HepG2 (cell line): ENCODE measurements at regions of chr14 and their contacts with region 1.

Region 1: GRCh38 chr14:54642801-54643697 is 76.1 kb downstream of the SAMD4A start:
- DNase-seq: peak; percentile 93
- ATAC-seq: peak; percentile 85
- H3K4me3 ChIP-seq: peak overlapping the region in 2 of 3 experiments; percentile 17 to 50; a peak in 4 of 6 replicates
- H3K27ac ChIP-seq: peak overlapping the region; percentile 83
- H3K4me1 ChIP-seq: peaks cover 94% of the 10 kb centered on the region
- H3K27me3 ChIP-seq: no peaks in the 10 kb centered on the region
- CTCF ChIP-seq: peak; percentile 53
- EP300 ChIP-seq: peak in 1 of 2 experiments; percentile 67; a peak in 2 of 4 replicates
- POLR2A ChIP-seq: no peak
- RAD21 ChIP-seq: no peak

Region 2: GRCh38 chr14:54691525-54692283 is 48.7 kb after region 1 on chr14:
- CTCF ChIA-PET with region 1: no interaction called
- POLR2A ChIA-PET with region 1: no interaction called
- in situ Hi-C with region 1: no loop called
- intact Hi-C with region 1: loop called (anchors 5 kb)
- DNase-seq: peak; percentile 70
- ATAC-seq: peak; percentile 96
- H3K4me3 ChIP-seq: no peak overlapping the region
- H3K27ac ChIP-seq: no peak overlapping the region
- H3K4me1 ChIP-seq: peaks cover 18% of the 10 kb centered on the region; the same call in 1 of the 2 replicates
- H3K27me3 ChIP-seq: no peaks in the 10 kb centered on the region; a peak in 1 of 5 replicates
- CTCF ChIP-seq: peak; percentile 90
- EP300 ChIP-seq: no peak
- POLR2A ChIP-seq: no peak
- RAD21 ChIP-seq: peak; percentile 90